Cardiac septum (tissue), 1 donor: ENCODE measurements at regions of chr4 and their contacts with region 1.

Region 1: GRCh38 chr4:1726146-1726934 is 5.0 kb downstream of the TACC3 start:
- DNase-seq: peak; percentile 93

Region 2: DNA sequence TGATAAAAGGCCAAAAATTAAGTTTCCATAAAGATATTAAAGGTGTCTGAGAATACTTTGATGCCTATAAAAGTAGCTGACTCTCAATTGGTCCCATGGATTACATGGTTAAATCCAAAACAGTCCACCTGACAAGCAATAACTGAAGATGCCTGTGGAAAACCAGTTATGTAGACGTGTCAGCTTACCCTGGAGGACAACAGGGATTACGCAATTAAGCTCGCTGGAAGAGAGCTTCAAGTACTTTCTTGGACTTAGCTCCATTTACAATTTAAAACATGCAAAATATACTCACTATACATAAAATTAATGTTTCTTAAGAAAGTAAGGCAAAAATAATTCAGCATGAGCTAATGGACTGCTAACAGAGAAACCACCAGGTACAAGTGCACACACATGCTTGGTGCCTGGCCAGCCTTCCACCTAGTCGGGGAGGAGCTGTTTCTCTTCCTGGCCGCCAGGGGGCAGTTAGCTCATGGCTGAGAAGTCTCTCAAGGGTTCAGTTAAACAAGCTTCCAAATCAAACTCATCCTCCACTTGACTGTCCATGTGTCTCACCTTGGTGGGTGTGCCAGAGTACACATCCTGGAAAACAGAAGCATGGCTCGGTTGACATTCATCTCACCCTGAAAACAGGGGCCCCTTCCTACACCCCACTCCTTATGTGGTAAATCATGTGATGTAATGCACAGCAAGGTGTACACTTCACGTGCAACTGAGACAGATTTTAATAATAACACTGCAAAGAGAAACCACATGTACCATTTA is 33.0 kb before region 1 on chr4:
- intact Hi-C with region 1: loop called (anchors 1 kb)
- DNase-seq: peak; percentile 91

Region 3: DNA sequence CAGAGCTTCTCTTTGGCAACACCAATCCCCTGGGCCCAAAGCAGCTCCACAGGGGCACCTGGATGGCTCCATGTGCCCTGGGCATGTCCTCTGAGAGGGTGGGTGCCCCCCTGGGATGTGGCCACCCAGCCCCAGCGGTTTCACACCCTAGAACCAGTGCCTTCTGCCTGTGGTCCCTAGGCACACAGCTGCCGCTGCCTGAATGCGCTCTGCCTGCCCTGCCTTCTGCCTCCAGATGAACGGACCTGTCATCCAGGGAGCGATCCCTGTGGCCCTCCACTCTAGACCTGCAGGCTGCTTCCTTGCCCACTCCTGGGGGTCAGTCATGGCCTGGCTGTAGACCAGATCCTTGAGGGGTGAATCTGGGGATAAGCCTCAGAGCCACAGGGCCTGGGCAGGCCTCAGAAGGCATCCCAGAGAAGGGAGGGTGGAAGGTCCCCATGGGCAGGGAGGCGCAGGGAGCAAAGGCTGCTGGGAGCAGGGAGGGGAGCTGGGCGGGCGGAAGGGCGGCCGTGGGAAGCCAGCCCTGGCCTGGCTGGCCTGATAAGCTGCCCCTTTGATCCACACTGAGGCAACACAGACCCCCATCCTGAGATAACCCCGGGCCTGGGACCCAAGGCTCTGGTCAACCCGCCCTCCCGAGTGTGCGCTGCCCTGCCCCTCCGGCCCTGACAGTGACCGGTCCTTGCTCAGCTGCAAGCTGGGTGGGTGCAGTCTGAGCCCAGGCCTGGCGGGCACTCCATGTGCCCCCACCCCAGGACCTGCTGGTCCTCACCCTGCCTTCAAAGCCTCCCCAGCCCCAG is 58.6 kb after region 1 on chr4:
- intact Hi-C with region 1: no loop called
- DNase-seq: peak; percentile 82